BJ (cell line): ENCODE measurements at regions of chr2 and their contacts with region 1.

Region 1: DNA sequence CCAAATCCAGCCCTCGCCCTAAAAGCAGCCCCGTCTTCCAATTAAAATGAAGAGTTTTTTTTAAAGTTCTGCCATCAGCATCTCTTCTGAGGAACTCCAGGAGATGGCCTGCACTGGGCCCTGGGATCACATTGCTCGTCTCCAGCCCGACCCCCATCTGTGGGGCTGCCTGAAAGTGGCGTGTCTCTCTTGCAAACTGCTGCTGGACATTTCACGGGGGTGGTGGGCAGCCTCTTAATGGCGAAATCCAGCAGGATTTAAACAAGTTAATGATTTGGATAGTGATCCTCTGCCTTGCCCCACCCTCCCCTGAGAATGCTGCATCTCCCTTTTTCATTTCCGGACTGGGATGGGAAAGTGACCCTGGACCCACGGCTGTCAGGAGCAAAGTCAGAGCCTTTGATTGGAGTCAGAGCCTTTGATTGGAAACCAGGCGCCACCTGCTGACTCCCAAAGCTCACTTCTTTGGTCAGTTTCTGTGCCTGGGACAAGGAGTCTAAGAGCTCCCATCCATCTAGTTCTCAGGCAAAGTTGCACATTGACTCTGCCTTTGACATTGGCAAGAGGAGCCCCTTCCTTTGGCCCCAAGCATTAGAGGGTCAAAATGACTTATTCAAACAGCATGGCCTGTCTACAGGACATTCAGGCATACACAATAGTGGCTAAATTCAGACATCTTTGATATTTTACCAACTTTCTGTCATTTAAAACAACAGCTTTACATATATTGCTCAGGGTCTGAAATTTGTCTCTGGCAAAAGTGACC is 155.2 kb downstream of the SH3BP4 start:
- DNase-seq: no peak
- H3K4me3 ChIP-seq: no peak overlapping the region
- H3K27me3 ChIP-seq: no peaks in the 10 kb centered on the region
- CTCF ChIP-seq: peak; percentile 82

Region 2: GRCh38 chr2:234081970-234082822 is 1024.9 kb before region 1 on chr2:
- CTCF ChIA-PET with region 1: no interaction called
- POLR2A ChIA-PET with region 1: no interaction called
- DNase-seq: no peak
- H3K4me3 ChIP-seq: no peak overlapping the region
- H3K27me3 ChIP-seq: no peaks in the 10 kb centered on the region
- CTCF ChIP-seq: no peak

Region 3: DNA sequence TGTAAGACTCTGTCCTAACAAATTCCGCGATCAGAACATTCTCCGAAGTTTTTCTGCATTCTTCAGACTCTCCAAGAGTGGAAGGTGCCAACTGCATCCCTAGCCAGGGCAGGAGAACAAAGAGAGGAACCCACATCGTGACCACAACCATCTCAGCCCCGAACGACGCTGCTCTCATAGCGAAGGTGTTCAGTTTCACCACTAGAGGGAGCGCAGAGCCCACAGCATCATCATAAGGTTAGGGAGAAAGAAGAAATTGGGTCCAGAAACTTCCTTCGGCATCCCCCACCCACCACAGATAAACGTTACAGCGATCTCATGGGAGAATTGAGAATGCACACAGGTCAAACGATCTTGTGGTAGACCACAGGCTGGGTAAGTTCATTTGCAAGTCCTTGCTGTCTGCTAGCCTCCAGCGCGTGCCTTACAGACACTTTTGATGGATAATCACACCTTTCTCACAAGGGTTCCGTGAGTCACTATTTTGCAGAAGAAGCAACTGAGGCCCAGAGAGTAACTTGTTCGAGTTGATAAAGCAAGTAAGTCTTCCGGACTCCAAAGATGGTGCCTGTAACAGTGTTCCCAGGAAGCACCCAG is 556.4 kb before region 1 on chr2:
- CTCF ChIA-PET with region 1: interaction called, 93 read pairs
- POLR2A ChIA-PET with region 1: no interaction called
- DNase-seq: no peak
- H3K4me3 ChIP-seq: no peak overlapping the region
- H3K27me3 ChIP-seq: no peaks in the 10 kb centered on the region
- CTCF ChIP-seq: peak; percentile 92

Region 4: GRCh38 chr2:234564699-234565098 is 542.4 kb before region 1 on chr2:
- CTCF ChIA-PET with region 1: interaction called, 39 read pairs
- POLR2A ChIA-PET with region 1: no interaction called
- DNase-seq: peak; percentile 57
- H3K4me3 ChIP-seq: no peak overlapping the region
- H3K27me3 ChIP-seq: no peaks in the 10 kb centered on the region
- CTCF ChIP-seq: peak; percentile 53

Region 5: DNA sequence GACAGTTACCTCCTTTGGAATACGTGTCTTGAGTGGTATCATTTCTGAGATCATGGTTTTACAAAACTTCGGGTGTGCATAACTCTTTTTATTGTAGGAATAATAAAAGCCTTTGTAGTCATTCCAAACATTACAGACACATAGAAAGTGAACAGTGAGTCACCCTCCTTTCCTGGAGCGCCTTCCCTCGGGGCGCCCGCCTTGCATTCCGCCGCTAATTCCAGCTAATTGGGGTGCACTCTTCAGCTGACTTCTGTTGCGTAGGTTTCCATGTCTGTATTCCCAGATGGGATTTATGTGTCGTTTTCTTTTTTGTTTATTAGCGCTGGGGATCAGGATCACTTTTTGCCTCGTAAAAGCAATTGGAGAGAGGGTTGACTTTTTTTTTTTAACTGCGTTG is 136.6 kb before region 1 on chr2:
- CTCF ChIA-PET with region 1: no interaction called
- POLR2A ChIA-PET with region 1: no interaction called
- DNase-seq: peak; percentile 56
- H3K4me3 ChIP-seq: no peak overlapping the region
- H3K27me3 ChIP-seq: no peaks in the 10 kb centered on the region
- CTCF ChIP-seq: no peak

Region 6: DNA sequence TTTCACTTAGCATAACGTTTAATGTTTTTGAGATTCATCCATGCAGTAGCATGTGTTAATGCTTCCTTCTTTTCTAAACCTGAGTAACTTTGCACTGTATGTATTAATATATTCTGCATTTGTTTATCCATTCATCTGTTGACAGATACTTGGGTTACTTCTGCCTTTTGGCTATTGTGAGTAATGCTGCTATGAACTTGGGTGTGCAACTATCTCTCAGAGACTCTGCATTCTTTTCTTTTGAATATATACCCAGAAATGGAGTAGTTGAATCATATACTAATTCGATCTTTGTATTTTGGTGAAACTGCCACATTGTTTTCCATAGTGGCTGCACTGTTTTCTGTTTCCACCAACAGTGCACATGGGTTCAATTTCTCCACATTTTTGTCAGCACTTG is 27.0 kb before region 1 on chr2:
- CTCF ChIA-PET with region 1: no interaction called
- POLR2A ChIA-PET with region 1: no interaction called
- DNase-seq: no peak
- H3K4me3 ChIP-seq: no peak overlapping the region
- H3K27me3 ChIP-seq: no peaks in the 10 kb centered on the region
- CTCF ChIP-seq: no peak

Region 7: GRCh38 chr2:235183786-235184185 is 76.7 kb after region 1 on chr2:
- CTCF ChIA-PET with region 1: no interaction called
- POLR2A ChIA-PET with region 1: no interaction called
- DNase-seq: no peak
- H3K4me3 ChIP-seq: no peak overlapping the region
- H3K27me3 ChIP-seq: peaks cover 2% of the 10 kb centered on the region
- CTCF ChIP-seq: no peak